ENCODE measurements at regions of chr15 and their contacts with region 1.

Region 1: GRCh38 chr15:85412956-85413854 is 32.8 kb downstream of the AKAP13 start:
- DNase-seq: peak; percentile 57
- ATAC-seq: peak; percentile 98
- H3K4me3 Mint-ChIP-seq: peak overlapping the region; percentile 64
- H3K27ac Mint-ChIP-seq: peak overlapping the region; percentile 80
- H3K4me1 Mint-ChIP-seq: peaks cover 50% of the 10 kb centered on the region
- H3K27me3 Mint-ChIP-seq: no peaks in the 10 kb centered on the region

Region 2: GRCh38 chr15:85296615-85297402 is 116.4 kb before region 1 on chr15:
- POLR2A ChIA-PET with region 1: interaction called, 12 read pairs
- DNase-seq: peak; percentile 49
- ATAC-seq: peak; percentile 95
- H3K4me3 Mint-ChIP-seq: peak overlapping the region; percentile 43
- H3K27ac Mint-ChIP-seq: peak overlapping the region; percentile 33
- H3K4me1 Mint-ChIP-seq: peaks cover 15% of the 10 kb centered on the region
- H3K27me3 Mint-ChIP-seq: no peaks in the 10 kb centered on the region

Region 3: GRCh38 chr15:85330901-85331588 is 82.2 kb before region 1 on chr15:
- POLR2A ChIA-PET with region 1: interaction called, 28 read pairs
- DNase-seq: peak; percentile 81
- ATAC-seq: peak; percentile 86
- H3K4me3 Mint-ChIP-seq: peak overlapping the region; percentile 96
- H3K27ac Mint-ChIP-seq: peak overlapping the region; percentile 94
- H3K4me1 Mint-ChIP-seq: peaks cover 38% of the 10 kb centered on the region
- H3K27me3 Mint-ChIP-seq: peaks cover 4% of the 10 kb centered on the region